Heart left ventricle (tissue), 16 donors: ENCODE measurements at regions of chrX and their contacts with region 1.

Region 1: DNA sequence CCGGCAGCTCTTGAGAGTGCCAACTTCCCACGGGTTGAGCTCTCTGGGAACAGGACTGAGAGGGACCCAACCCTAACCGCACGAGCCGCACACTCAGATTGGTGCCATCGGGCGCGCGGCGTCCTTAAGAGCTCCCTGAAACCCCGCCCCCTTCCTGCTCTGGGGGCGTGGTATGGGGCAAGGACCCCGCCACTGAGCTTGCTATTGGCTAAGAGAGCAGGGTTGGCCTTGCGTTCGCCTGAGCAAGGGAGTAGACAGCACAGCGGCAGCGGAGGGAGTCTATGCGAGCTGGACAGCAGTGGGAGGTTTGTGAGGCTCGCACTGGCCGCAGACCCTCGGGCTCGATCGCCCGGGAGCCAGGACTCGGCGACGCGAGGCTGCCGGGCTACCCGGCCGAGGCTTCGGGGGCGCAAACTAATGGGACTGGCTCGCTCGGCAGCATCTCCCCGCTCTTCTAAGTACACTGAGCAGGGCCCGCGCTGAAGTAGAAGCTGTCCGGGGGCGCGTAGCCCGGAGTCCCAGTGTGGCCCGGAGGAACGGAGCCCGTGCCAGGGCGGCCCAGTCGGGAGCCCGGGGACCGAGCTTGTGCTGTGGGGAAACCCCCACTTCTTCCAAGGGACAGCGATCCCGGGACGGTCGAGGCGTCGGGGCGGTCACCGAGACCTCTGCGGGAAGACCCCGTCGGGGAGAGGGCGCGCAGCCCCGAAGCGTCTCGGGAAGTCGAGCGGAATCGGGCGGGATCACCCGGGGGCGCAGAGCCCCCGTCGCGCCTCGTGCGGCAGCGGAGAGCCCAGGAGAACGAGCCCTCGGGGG is at the start of gene EFNB1:
- DNase-seq: peak; percentile 91 to 95 (median 93)
- ATAC-seq: peak; percentile 93 to 96 (median 94)
- H3K4me3 ChIP-seq: peak within 1 kb of the TSS; percentile 63 to 98 (median 81)
- H3K27ac ChIP-seq: peak within 1 kb of the TSS; percentile 65 to 92 (median 85)
- H3K4me1 ChIP-seq: peaks cover 0 to 22% (median 4%) of the 10 kb centered on the region in 12 donors
- H3K27me3 ChIP-seq: peaks cover 0 to 25% (median 0%) of the 10 kb centered on the region in 9 donors
- CTCF ChIP-seq: no peak
- POLR2A ChIP-seq: peak; percentile 72 to 99
- total RNA-seq, gene EFNB1: 15.9 to 78.8 (median 23.1) TPM

Region 2: DNA sequence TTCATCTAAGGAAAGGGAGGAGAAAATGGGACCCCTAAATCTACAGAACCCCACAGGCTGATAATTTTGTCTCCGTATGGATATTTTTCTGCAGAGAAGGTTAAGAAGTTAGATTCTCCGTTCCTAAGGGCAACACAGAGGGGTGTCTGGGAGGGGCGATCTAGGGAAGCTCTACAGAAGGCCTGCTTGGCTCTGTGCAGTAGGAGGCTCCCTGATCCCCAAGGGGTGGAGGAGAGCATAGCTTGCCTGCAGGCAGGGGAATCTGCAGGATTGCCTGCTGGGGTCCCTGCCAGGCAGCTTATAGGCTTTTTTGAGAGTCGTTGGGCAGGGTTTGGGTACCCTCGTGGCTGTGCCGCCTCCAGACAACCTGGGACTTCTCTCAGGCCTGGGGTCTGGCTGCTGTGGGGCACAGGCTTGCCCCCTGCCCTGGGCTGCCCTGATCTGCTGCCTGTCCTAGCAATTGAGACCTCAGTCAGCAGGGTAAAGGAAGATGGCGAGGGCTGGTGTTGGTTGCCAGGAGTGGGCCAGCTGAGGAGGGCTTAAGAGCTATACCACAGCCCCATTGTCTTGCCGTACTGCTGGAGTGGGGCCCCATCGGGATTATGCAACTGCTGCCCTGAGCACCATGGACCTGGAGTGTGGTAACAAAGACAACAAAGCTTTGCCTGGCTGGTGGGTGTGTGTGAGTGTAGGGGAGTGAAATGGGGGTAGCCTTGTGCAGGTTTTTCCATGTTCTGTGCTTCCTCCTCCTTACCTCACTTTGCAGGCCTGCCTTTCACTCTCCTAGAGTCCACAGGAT is 74.0 kb after region 1 on chrX:
- intact Hi-C with region 1: loop called in 3 of 10 experiments (anchors 5 to 10 kb)
- DNase-seq: no peak
- ATAC-seq: no peak
- H3K4me3 ChIP-seq: no peak overlapping the region
- H3K27ac ChIP-seq: no peak overlapping the region
- H3K4me1 ChIP-seq: peaks cover 0 to 2% (median 0%) of the 10 kb centered on the region in 12 donors
- H3K27me3 ChIP-seq: peaks cover 0 to 1% (median 0%) of the 10 kb centered on the region in 9 donors
- CTCF ChIP-seq: no peak
- POLR2A ChIP-seq: no peak

Region 3: DNA sequence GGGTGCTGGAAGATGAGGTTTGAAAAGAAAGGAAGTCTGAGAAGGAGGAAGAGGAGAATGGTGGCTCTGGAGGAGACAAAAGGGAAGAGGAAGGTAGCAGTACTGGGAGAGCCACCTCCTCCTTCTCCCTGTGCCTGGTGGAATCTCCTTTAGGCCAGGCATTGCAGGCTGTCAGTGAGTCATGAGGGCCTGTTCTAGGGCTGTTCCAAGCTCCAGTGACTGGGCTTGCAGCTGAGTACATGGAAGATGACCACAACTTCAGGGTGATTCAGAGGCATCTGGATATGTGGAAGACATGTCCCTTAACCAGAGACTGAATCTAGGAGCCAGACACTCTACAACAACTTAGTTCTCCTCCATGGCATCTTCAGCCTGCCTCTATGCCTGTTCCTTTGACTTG is 107.7 kb after region 1 on chrX:
- intact Hi-C with region 1: loop called in 3 of 10 experiments (anchors 1 to 5 kb)
- DNase-seq: no peak
- ATAC-seq: peak in 2 of 4 donors; percentile 57 to 63
- H3K4me3 ChIP-seq: no peak overlapping the region
- H3K27ac ChIP-seq: peak overlapping the region in 2 of 12 donors; percentile 19 to 38
- H3K4me1 ChIP-seq: peaks cover 0 to 36% (median 14%) of the 10 kb centered on the region in 12 donors
- H3K27me3 ChIP-seq: peaks cover 0 to 2% (median 0%) of the 10 kb centered on the region in 9 donors
- CTCF ChIP-seq: no peak
- POLR2A ChIP-seq: no peak

Region 4: DNA sequence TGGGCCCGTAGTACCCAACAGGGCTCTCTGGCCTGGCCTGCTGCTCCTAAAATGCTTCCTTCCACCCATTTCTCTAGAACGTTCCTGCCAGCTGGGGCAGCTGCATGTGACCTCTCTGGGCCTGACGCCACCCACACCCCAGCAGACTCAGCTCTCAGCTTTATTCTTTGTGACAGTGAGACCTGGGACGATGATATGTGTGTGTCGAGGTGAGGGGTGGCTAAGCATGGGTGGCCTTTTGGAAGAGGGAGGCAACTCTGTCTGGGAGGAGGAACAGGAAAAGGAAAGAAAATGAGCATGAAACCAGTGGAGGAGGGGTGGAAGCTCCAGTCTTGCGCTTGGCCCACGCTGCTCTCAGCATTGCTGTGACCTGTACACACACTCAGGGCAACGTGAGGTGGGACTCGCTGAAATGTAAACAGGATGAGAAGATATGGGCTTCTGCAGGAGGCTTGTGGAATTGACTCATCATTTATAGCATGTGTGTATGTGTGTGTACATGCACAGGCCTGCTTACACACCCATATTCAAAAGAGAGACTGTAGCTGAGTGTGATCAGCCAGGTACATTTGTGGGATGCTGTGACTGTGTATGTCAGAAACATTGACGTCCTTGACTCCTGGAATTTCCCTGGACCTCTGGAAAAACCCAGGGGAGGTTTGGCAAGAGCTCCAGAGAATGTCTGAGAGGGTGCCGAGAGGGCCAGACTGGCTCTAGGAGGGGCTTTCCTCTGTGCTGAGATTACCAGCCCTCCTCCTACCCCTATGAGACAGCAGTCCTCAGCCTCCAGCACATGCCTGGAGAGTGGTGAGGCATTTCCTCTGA is 198.4 kb after region 1 on chrX:
- intact Hi-C with region 1: loop called in 2 of 10 experiments (anchors 1 to 10 kb)
- DNase-seq: no peak
- ATAC-seq: peak in 1 of 4 donors; percentile 71
- H3K4me3 ChIP-seq: no peak overlapping the region
- H3K27ac ChIP-seq: peak overlapping the region in 1 of 12 donors; percentile 1
- H3K4me1 ChIP-seq: peaks cover 0 to 34% (median 12%) of the 10 kb centered on the region in 12 donors
- H3K27me3 ChIP-seq: peaks cover 0 to 5% (median 0%) of the 10 kb centered on the region in 9 donors
- CTCF ChIP-seq: no peak
- POLR2A ChIP-seq: no peak

Region 5: DNA sequence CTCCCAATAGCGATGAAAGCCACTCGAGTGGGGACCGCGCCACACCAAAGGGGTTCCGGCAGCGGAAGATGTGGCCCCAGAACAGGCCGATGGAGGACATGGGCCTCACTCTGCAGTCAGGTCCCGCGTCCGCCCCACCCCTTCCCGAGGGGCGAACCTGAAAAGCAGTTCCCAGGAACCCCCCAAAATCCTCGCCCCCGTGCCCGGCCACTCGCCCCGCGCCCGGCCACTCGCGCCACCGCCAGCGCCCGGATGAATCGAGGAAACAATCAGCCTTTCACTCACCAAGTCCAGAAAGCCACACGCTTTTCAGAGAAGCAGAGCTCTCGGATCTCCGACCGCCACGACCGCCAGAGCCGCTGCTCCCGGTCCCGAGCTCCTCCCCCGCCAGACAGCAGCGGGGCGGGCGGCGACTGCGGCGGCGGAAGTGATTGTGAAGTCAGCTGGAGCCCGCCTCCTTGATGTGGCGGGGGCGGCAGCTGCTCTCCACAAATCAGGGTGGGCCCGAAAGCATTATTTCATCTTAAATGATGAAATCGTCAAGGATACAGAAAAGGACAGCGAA is 336.2 kb after region 1 on chrX and contains the start of gene PJA1:
- intact Hi-C with region 1: loop called in 2 of 10 experiments (anchors 10 kb)
- DNase-seq: peak; percentile 76 to 87 (median 78)
- ATAC-seq: peak; percentile 69 to 98 (median 96)
- H3K4me3 ChIP-seq: peak within 1 kb of the TSS; percentile 58 to 95 (median 73)
- H3K27ac ChIP-seq: peak within 1 kb of the TSS; percentile 53 to 87 (median 75)
- H3K4me1 ChIP-seq: peaks cover 0 to 6% (median 0%) of the 10 kb centered on the region in 12 donors
- H3K27me3 ChIP-seq: peaks cover 0 to 15% (median 0%) of the 10 kb centered on the region in 9 donors
- CTCF ChIP-seq: no peak
- POLR2A ChIP-seq: peak in 1 of 2 donors; percentile 46
- total RNA-seq, gene PJA1: 7.8 to 20.1 (median 14.4) TPM

Region 6: GRCh38 chrX:69253821-69254220 is 424.9 kb after region 1 on chrX:
- intact Hi-C with region 1: no loop called
- DNase-seq: no peak
- ATAC-seq: no peak
- H3K4me3 ChIP-seq: no peak overlapping the region
- H3K27ac ChIP-seq: no peak overlapping the region
- H3K4me1 ChIP-seq: no peaks in the 10 kb centered on the region
- H3K27me3 ChIP-seq: no peaks in the 10 kb centered on the region
- CTCF ChIP-seq: no peak
- POLR2A ChIP-seq: no peak

Region 7: GRCh38 chrX:69280933-69281332 is 452.0 kb after region 1 on chrX:
- intact Hi-C with region 1: loop called (anchors 2 to 5 kb)
- DNase-seq: peak in 3 of 5 donors; percentile 21 to 47 (median 27)
- ATAC-seq: peak; percentile 44 to 75 (median 56)
- H3K4me3 ChIP-seq: no peak overlapping the region
- H3K27ac ChIP-seq: peak overlapping the region in 4 of 12 donors; percentile 5 to 50 (median 36)
- H3K4me1 ChIP-seq: peaks cover 0 to 20% (median 2%) of the 10 kb centered on the region in 12 donors
- H3K27me3 ChIP-seq: peaks cover 0 to 28% (median 0%) of the 10 kb centered on the region in 9 donors
- CTCF ChIP-seq: no peak
- POLR2A ChIP-seq: no peak